PC-3 (cell line): ENCODE measurements at regions of chr11 and their contacts with region 1.

Region 1: GRCh38 chr11:67373925-67374618 is 674 bp upstream of the CLCF1 start:
- DNase-seq: peak; percentile 99
- ATAC-seq: peak; percentile 64
- H3K4me3 ChIP-seq: peak overlapping the region; percentile 90
- H3K27ac ChIP-seq: peak overlapping the region; percentile 100
- H3K4me1 ChIP-seq: peaks cover 68% of the 10 kb centered on the region
- H3K27me3 ChIP-seq: no peaks in the 10 kb centered on the region
- CTCF ChIP-seq: peak; percentile 64

Region 2: DNA sequence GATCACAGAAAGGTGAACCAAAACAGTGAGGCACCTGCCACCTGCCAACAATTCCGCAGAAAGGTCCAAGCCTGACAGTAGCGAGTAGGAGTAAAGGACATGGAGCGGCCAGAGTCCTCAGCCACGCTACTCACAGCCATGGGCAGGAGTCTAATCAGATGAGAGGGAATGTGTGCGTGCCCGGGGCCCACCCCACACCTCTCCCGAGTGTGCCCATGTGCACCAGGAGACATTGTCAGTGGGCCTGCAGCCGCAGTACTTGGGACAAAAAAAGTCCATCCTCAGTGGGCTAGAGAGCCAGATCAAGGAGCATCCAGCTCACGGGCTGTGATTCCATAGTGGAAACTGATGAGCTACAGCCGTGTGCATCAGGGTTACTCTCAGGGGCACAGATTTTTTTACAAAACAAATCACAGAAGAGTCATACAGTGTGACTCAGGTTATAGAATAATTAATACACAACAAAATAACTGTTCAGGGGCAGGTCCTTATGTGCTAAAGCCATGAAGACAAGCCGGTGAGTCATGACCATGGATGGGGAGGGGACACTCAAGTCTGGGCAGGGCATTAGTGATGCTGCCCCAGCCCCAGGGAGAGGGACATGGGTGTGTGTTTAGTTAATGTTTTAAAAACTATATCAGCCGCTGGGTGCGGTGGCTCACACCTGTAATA is 1400.5 kb before region 1 on chr11:
- CTCF ChIA-PET with region 1: interaction called, 16 read pairs
- POLR2A ChIA-PET with region 1: no interaction called
- intact Hi-C with region 1: no loop called
- DNase-seq: peak; percentile 82
- ATAC-seq: peak; percentile 96
- H3K4me3 ChIP-seq: no peak overlapping the region
- H3K27ac ChIP-seq: no peak overlapping the region
- H3K4me1 ChIP-seq: peaks cover 6% of the 10 kb centered on the region; the same call in 1 of the 2 replicates
- H3K27me3 ChIP-seq: no peaks in the 10 kb centered on the region
- CTCF ChIP-seq: no peak

Region 3: GRCh38 chr11:67213178-67213621 is 160.9 kb before region 1 on chr11:
- CTCF ChIA-PET with region 1: no interaction called
- POLR2A ChIA-PET with region 1: interaction called, 11 read pairs
- intact Hi-C with region 1: no loop called
- DNase-seq: no peak
- ATAC-seq: no peak
- H3K4me3 ChIP-seq: no peak overlapping the region
- H3K27ac ChIP-seq: no peak overlapping the region
- H3K4me1 ChIP-seq: no peaks in the 10 kb centered on the region
- H3K27me3 ChIP-seq: no peaks in the 10 kb centered on the region
- CTCF ChIP-seq: no peak

Region 4: GRCh38 chr11:67345920-67346799 is 27.9 kb before region 1 on chr11:
- CTCF ChIA-PET with region 1: interaction called, 55 read pairs
- POLR2A ChIA-PET with region 1: interaction called, 8 read pairs
- intact Hi-C with region 1: loop called (anchors 1 kb)
- DNase-seq: peak; percentile 99
- ATAC-seq: peak; percentile 92
- H3K4me3 ChIP-seq: peak overlapping the region; percentile 26; the same call in 1 of the 2 replicates
- H3K27ac ChIP-seq: peak overlapping the region; percentile 95
- H3K4me1 ChIP-seq: peaks cover 38% of the 10 kb centered on the region
- H3K27me3 ChIP-seq: no peaks in the 10 kb centered on the region
- CTCF ChIP-seq: peak; percentile 99

Region 5: GRCh38 chr11:67391304-67392132 is 17.4 kb after region 1 on chr11 and contains the start of gene RAD9A:
- CTCF ChIA-PET with region 1: interaction called, 4 read pairs
- POLR2A ChIA-PET with region 1: interaction called, 18 read pairs
- intact Hi-C with region 1: no loop called
- DNase-seq: peak; percentile 97
- ATAC-seq: peak; percentile 66
- H3K4me3 ChIP-seq: peak within 1 kb of the TSS; percentile 81
- H3K27ac ChIP-seq: peak within 1 kb of the TSS; percentile 81
- H3K4me1 ChIP-seq: peaks cover 8% of the 10 kb centered on the region; the same call in 1 of the 2 replicates
- H3K27me3 ChIP-seq: no peaks in the 10 kb centered on the region
- CTCF ChIP-seq: no peak
- total RNA-seq, gene RAD9A: 45.5 and 48.9 TPM in 2 replicates

Region 6: DNA sequence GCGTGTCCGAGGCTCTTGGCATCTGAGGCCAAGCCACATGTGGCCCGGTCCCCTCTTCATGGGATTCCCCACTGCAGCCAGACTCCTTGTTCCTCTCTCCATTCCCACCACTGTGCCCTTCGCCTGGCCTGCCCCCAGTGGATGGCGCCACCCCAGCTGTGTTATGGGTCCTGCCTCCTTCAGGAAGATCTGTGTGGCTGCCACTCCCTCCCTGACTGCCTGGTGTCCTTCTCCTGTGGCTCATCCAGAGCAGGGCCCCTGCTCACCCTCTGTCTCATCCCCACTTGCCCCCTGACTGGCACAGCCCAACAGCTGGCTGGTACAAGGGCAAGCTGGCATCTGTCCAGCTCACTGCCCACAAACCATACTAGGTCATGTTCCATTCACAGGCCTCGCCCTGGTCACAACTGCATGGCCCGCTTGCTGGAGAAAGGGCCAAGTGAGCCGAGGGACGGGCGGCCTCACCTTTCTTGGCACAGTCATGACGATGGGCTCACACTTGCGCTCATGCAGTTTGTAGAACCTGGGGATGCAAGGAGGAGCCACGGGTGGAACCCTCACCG is 65.3 kb after region 1 on chr11:
- CTCF ChIA-PET with region 1: no interaction called
- POLR2A ChIA-PET with region 1: no interaction called
- intact Hi-C with region 1: no loop called
- DNase-seq: peak; percentile 36
- ATAC-seq: peak; percentile 19
- H3K4me3 ChIP-seq: no peak overlapping the region
- H3K27ac ChIP-seq: no peak overlapping the region
- H3K4me1 ChIP-seq: 0 out of 2 replicates have a peak, but pooled peaks cover 6% of the 10 kb centered on the region
- H3K27me3 ChIP-seq: no peaks in the 10 kb centered on the region
- CTCF ChIP-seq: peak; percentile 64